Aorta (tissue), 5 donors: ENCODE measurements at regions of chr4 and their contacts with region 1.

Region 1: DNA sequence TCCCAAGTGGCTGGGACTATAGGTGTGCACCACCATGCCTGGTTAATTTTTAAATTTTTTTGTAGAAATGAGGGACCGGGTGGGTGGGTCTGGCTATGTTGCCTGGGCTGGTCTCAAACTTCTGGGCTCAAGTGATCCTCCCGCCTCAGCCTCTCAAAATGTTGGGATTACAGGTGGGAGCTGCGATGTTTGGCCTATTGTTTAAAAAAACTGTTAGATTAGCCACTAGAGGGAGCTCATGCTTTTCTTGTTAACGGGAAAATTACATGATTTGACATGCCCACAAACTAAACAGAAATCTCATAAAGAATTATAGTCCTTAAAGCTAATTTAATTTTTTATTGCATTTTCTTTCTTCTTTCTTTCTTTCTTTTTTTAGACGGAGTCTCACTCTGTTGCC is 5.0 kb upstream of the SDAD1 start:
- DNase-seq: no peak
- ATAC-seq: no peak
- H3K4me3 ChIP-seq: no peak overlapping the region
- H3K27ac ChIP-seq: no peak overlapping the region
- H3K4me1 ChIP-seq: no peaks in the 10 kb centered on the region
- H3K27me3 ChIP-seq: no peaks in the 10 kb centered on the region

Region 2: GRCh38 chr4:76067652-76068286 is 72.0 kb after region 1 on chr4:
- intact Hi-C with region 1: loop called (anchors 1 to 2 kb)
- DNase-seq: peak in 1 of 2 donors; percentile 78
- ATAC-seq: no peak
- H3K4me3 ChIP-seq: no peak overlapping the region
- H3K27ac ChIP-seq: no peak overlapping the region
- H3K4me1 ChIP-seq: no peaks in the 10 kb centered on the region
- H3K27me3 ChIP-seq: no peaks in the 10 kb centered on the region

Region 3: GRCh38 chr4:76148142-76148865 is 152.6 kb after region 1 on chr4 and contains the start of gene NUP54:
- intact Hi-C with region 1: loop called in 1 of 2 experiments (anchors 10 kb)
- DNase-seq: peak; percentile 97 to 98
- ATAC-seq: peak; percentile 100
- H3K4me3 ChIP-seq: peak within 1 kb of the TSS; percentile 80 to 83
- H3K27ac ChIP-seq: peak within 1 kb of the TSS in 1 of 2 donors; percentile 76
- H3K4me1 ChIP-seq: no peaks in the 10 kb centered on the region
- H3K27me3 ChIP-seq: no peaks in the 10 kb centered on the region
- total RNA-seq, gene NUP54: 38.8 to 45.5 TPM